ENCODE measurements at regions of chr20 and their contacts with region 1.

Region 1: GRCh38 chr20:35269055-35269781 is 8.7 kb downstream of the MMP24OS start:
- DNase-seq: no peak
- H3K4me3 ChIP-seq: no peak overlapping the region
- CTCF ChIP-seq: peak; percentile 95

Region 2: GRCh38 chr20:35215066-35215956 is 53.9 kb before region 1 on chr20:
- CTCF ChIA-PET with region 1: interaction called, 10 read pairs
- POLR2A ChIA-PET with region 1: no interaction called
- DNase-seq: peak; percentile 29
- H3K4me3 ChIP-seq: no peak overlapping the region
- CTCF ChIP-seq: no peak

Region 3: GRCh38 chr20:35437491-35437998 is 168.3 kb after region 1 on chr20:
- CTCF ChIA-PET with region 1: interaction called, 53 read pairs
- POLR2A ChIA-PET with region 1: no interaction called
- DNase-seq: no peak
- H3K4me3 ChIP-seq: peak overlapping the region; percentile 68
- CTCF ChIP-seq: no peak